ENCODE measurements at regions of chr10 and their contacts with region 1.

Region 1: DNA sequence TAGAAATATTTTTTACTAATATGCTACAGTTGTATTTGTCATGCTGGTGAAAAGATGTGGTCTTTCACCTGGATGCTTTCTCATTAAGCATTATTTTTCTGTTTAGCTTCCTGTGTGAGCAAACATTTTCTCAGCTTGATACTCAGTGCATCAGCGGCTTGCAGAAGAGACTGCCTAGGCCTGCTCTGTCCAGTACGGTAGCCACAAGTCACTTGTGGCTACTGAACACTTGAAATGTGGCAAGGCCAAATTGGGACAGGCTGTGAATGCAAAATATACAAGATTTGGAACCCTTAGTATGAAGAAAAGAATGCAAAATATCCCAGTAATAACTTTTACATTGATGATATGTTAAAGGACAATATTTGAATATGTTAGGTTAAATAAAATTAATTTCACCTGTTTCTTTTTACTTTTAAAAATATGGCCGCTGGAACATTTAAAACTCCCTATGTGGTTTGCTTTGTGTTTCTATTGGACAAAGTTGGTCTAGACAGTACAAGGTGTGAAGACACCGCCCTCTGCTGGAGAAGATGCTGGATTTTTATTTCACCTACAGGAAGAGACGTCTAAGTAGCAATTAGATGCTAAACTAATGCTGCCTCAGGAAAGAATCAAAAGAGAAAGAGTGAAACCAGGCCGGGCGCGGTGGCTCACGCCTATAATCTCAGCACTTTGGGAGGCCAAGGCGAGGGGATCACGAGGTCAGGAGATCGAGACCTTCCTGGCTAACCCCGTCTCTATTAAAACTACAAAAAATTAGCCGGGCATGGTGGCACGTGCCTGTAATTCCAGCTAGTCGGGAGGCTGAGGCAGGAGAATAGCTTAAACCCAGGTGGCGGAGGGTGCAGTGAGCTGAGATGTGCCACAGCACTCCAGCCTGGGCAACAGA is 5.3 kb downstream of the SRGN start:
- DNase-seq: peak; percentile 88
- H3K4me3 Mint-ChIP-seq: peak overlapping the region; percentile 53
- H3K27ac Mint-ChIP-seq: peak overlapping the region; percentile 72
- H3K4me1 Mint-ChIP-seq: peaks cover 63% of the 10 kb centered on the region
- H3K27me3 Mint-ChIP-seq: no peaks in the 10 kb centered on the region

Region 2: GRCh38 chr10:69004821-69005220 is 88.4 kb before region 1 on chr10:
- CTCF ChIA-PET with region 1: interaction called, 112 read pairs
- POLR2A ChIA-PET with region 1: interaction called, 49 read pairs
- DNase-seq: no peak
- H3K4me3 Mint-ChIP-seq: no peak overlapping the region
- H3K27ac Mint-ChIP-seq: no peak overlapping the region
- H3K4me1 Mint-ChIP-seq: peaks cover 12% of the 10 kb centered on the region
- H3K27me3 Mint-ChIP-seq: no peaks in the 10 kb centered on the region

Region 3: DNA sequence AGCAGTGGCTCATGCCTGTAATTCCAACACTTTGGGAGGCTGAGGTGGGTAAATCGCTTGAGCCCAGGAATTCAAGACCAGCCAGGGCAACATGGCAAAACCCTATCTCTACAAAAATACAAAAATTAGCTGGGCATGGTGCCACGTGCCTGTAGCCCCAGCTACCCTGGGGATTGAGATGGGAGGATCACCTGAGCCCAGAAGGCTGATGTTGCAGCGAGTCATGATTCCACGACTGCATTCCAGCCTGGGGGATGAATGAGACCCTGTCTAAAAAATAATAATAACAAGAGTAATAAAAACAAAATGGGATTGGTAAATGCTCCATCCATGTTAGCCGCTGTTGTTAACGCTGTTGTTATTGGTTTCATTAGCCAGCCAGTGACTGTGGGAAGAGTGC is 125.6 kb after region 1 on chr10:
- CTCF ChIA-PET with region 1: no interaction called
- POLR2A ChIA-PET with region 1: no interaction called
- DNase-seq: no peak
- H3K4me3 Mint-ChIP-seq: no peak overlapping the region
- H3K27ac Mint-ChIP-seq: no peak overlapping the region
- H3K4me1 Mint-ChIP-seq: peaks cover 69% of the 10 kb centered on the region
- H3K27me3 Mint-ChIP-seq: no peaks in the 10 kb centered on the region

Region 4: GRCh38 chr10:69516796-69517195 is 423.6 kb after region 1 on chr10:
- CTCF ChIA-PET with region 1: no interaction called
- POLR2A ChIA-PET with region 1: no interaction called
- DNase-seq: no peak
- H3K4me3 Mint-ChIP-seq: no peak overlapping the region
- H3K27ac Mint-ChIP-seq: no peak overlapping the region
- H3K4me1 Mint-ChIP-seq: no peaks in the 10 kb centered on the region
- H3K27me3 Mint-ChIP-seq: peaks cover 22% of the 10 kb centered on the region